ENCODE measurements at regions of chrX and their contacts with region 1.

Region 1: GRCh38 chrX:137137502-137137901 is 103.7 kb upstream of the GPR101 start:
- DNase-seq: no peak
- ATAC-seq: no peak
- H3K4me3 ChIP-seq: no peak overlapping the region
- H3K27ac ChIP-seq: no peak overlapping the region
- H3K4me1 ChIP-seq: no peaks in the 10 kb centered on the region
- H3K27me3 ChIP-seq: no peaks in the 10 kb centered on the region
- CTCF ChIP-seq: no peak

Region 2: GRCh38 chrX:137051978-137052642 is 85.4 kb before region 1 on chrX:
- CTCF ChIA-PET with region 1: interaction called, 17 read pairs
- POLR2A ChIA-PET with region 1: no interaction called
- in situ Hi-C with region 1: no loop called
- intact Hi-C with region 1: no loop called
- DNase-seq: peak; percentile 8
- ATAC-seq: peak; percentile 97
- H3K4me3 ChIP-seq: peak overlapping the region; percentile 48 to 74
- H3K27ac ChIP-seq: no peak overlapping the region
- H3K4me1 ChIP-seq: peaks cover 5% of the 10 kb centered on the region
- H3K27me3 ChIP-seq: peaks cover 30% of the 10 kb centered on the region
- CTCF ChIP-seq: peak; percentile 97